ENCODE measurements at regions of chr19 and their contacts with region 1.

Region 1: DNA sequence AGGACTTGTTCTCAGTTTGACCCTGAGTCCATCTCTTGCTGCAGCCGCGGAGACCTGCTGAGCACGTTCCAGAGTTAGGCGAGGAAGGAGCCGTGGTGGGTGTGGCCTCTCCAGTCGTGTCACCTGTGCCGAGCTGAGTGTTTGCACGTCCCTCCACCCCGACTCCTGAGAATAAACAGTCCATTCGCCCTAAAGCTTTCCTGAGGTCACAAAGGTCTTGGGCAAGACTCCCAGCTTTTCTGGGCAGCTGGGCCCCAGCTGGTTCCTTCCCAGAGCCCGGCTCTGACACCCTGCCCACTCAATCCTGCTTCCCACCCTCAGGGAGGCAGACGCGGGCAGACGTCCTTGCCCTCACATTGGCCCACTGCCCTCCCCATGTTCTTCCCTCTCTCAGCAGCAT is 142.1 kb downstream of the KCTD15 start:
- DNase-seq: no peak
- H3K4me3 ChIP-seq: no peak overlapping the region
- H3K27ac ChIP-seq: no peak overlapping the region
- H3K4me1 ChIP-seq: no peaks in the 10 kb centered on the region
- H3K27me3 ChIP-seq: peaks cover 15% of the 10 kb centered on the region
- CTCF ChIP-seq: no peak

Region 2: GRCh38 chr19:33900817-33901216 is 38.0 kb before region 1 on chr19:
- CTCF ChIA-PET with region 1: interaction called, 13 read pairs
- POLR2A ChIA-PET with region 1: no interaction called
- intact Hi-C with region 1: no loop called
- DNase-seq: no peak
- H3K4me3 ChIP-seq: no peak overlapping the region
- H3K27ac ChIP-seq: no peak overlapping the region
- H3K4me1 ChIP-seq: no peaks in the 10 kb centered on the region
- H3K27me3 ChIP-seq: peaks cover 18% of the 10 kb centered on the region
- CTCF ChIP-seq: no peak

Region 3: GRCh38 chr19:33927789-33928457 is 10.9 kb before region 1 on chr19:
- CTCF ChIA-PET with region 1: no interaction called
- POLR2A ChIA-PET with region 1: no interaction called
- intact Hi-C with region 1: no loop called
- DNase-seq: no peak
- H3K4me3 ChIP-seq: no peak overlapping the region
- H3K27ac ChIP-seq: no peak overlapping the region
- H3K4me1 ChIP-seq: no peaks in the 10 kb centered on the region
- H3K27me3 ChIP-seq: peaks cover 4% of the 10 kb centered on the region
- CTCF ChIP-seq: no peak